ENCODE measurements at regions of chr11 and their contacts with region 1.

Region 1: DNA sequence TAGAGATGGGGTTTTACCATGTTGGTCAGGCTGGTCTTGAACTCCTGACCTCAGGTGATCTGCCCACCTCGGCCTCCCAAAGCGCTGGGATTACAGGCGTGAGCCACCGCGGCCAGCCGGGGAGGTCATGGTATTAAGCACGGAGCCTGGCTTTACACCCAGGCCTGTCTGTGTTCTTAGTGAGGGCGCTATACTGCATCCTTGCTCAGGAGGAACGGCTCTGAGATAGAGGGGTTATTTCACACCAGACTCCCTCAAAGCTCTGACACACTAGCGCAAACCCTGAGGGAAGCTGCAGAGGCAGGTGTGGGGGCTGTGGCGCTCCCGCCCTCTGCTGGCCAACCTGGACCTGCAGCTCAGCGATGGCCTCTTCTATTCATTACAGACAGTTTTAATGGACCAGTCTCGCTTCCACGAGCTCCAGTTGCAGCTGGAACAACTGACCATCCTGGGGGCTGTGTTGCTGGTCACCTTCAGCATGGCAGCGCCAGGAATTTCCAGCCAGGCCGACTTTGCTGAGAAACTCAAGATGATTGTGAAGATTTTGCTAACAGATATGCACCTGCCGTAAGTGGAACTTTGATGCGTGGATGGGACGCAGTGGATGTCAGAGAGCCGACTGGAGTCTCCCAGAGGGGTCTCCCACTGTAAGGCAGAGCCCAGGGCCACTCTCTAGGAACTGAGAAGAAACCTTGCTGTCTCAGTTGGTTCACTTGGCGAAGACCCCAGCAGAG is 26.2 kb downstream of the TCP11L1 start:
- DNase-seq: peak; percentile 62 to 83 (median 76)
- ATAC-seq: peak; percentile 91
- H3K4me3 ChIP-seq: no peak overlapping the region
- H3K4me3 Mint-ChIP-seq: peak overlapping the region in 2 of 10 donors; percentile 42 to 43
- H3K27ac ChIP-seq: no peak overlapping the region
- H3K27ac Mint-ChIP-seq: peak overlapping the region in 4 of 9 donors; percentile 14 to 83 (median 58)
- H3K4me1 ChIP-seq: peaks cover 0 to 21% of the 10 kb centered on the region in 2 donors
- H3K4me1 Mint-ChIP-seq: peaks cover 24 to 36% (median 29%) of the 10 kb centered on the region in 7 donors
- H3K27me3 ChIP-seq: no peaks in the 10 kb centered on the region
- H3K27me3 Mint-ChIP-seq: no peaks in the 10 kb centered on the region

Region 2: DNA sequence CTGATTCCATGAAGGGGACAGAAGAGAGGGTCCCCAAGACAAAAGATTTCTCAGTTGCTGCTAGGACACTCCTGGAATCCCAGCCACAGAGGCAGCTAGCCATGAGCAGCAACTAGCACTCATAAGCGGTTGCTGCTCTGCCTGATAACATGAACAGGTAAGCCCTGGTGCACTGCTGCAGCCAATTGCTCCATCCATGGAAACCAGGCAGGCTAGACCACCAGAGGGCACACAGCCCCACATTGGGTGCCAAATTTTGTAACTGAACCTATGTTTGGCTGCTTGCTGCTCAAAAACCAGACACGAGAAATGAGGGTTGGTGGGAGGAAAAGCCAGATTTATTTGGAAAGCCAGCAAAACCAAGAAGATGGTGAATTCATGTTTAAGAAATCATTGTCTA is 194.9 kb before region 1 on chr11:
- CTCF ChIA-PET with region 1: no interaction called
- POLR2A ChIA-PET with region 1: no interaction called
- intact Hi-C with region 1: loop called in 1 of 2 experiments (anchors 1 kb)
- DNase-seq: peak in 5 of 9 donors; percentile 11 to 32 (median 14)
- ATAC-seq: peak; percentile 52
- H3K4me3 ChIP-seq: no peak overlapping the region
- H3K4me3 Mint-ChIP-seq: peak overlapping the region in 1 of 10 donors; percentile 36
- H3K27ac ChIP-seq: no peak overlapping the region
- H3K27ac Mint-ChIP-seq: no peak overlapping the region
- H3K4me1 ChIP-seq: no peaks in the 10 kb centered on the region
- H3K4me1 Mint-ChIP-seq: no peaks in the 10 kb centered on the region
- H3K27me3 ChIP-seq: no peaks in the 10 kb centered on the region
- H3K27me3 Mint-ChIP-seq: peaks cover 6 to 35% (median 22%) of the 10 kb centered on the region in 5 donors

Region 3: DNA sequence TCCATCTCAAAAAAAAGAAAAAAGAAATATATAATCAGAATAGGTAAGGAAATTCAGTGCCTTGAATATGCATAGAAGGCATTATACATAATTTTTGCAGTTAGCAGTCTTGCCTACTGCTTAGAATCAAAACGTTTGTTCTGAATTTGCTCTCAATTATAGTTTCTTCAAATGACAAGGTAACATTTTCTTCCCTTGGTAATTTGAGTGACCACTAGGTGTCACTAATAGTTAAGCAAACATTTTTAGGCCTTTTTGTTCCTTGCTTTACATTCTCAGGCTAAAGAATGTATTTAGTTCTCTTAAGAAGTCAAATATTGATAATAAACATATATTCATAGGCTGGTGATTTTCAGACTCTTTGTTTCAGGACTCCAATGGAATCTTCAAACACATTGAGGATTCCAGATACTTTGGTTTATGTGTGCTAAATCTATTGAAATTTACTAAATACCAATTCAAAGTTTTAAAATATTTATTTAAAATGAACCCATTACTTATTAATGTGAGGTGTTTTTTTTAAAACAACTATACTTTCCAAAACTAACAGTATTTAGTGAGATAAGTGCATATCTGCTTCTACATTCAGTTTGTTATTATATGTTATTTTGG is 105.0 kb before region 1 on chr11:
- CTCF ChIA-PET with region 1: interaction called, 179 read pairs
- POLR2A ChIA-PET with region 1: interaction called, 3 read pairs
- intact Hi-C with region 1: loop called (anchors 1 kb)
- DNase-seq: peak in 7 of 9 donors; percentile 33 to 66 (median 55)
- ATAC-seq: peak; percentile 67
- H3K4me3 ChIP-seq: no peak overlapping the region
- H3K4me3 Mint-ChIP-seq: no peak overlapping the region
- H3K27ac ChIP-seq: no peak overlapping the region
- H3K27ac Mint-ChIP-seq: no peak overlapping the region
- H3K4me1 ChIP-seq: no peaks in the 10 kb centered on the region
- H3K4me1 Mint-ChIP-seq: peaks cover 0 to 5% (median 0%) of the 10 kb centered on the region in 7 donors
- H3K27me3 ChIP-seq: no peaks in the 10 kb centered on the region
- H3K27me3 Mint-ChIP-seq: no peaks in the 10 kb centered on the region

Region 4: GRCh38 chr11:33015621-33016551 is 49.7 kb before region 1 on chr11 and contains the start of gene DEPDC7:
- CTCF ChIA-PET with region 1: interaction called, 12 read pairs
- POLR2A ChIA-PET with region 1: interaction called, 3 read pairs
- intact Hi-C with region 1: loop called in 1 of 2 experiments (anchors 1 kb)
- DNase-seq: peak; percentile 72 to 84 (median 81)
- ATAC-seq: peak; percentile 90
- H3K4me3 ChIP-seq: peak within 1 kb of the TSS; percentile 65
- H3K4me3 Mint-ChIP-seq: peak within 1 kb of the TSS; percentile 86 to 93 (median 90)
- H3K27ac ChIP-seq: peak within 1 kb of the TSS; percentile 50
- H3K27ac Mint-ChIP-seq: peak within 1 kb of the TSS in 6 of 9 donors; percentile 63 to 77 (median 69)
- H3K4me1 ChIP-seq: peaks cover 14 to 23% of the 10 kb centered on the region in 2 donors
- H3K4me1 Mint-ChIP-seq: peaks cover 14 to 73% (median 58%) of the 10 kb centered on the region in 7 donors
- H3K27me3 ChIP-seq: peaks cover 0 to 7% of the 10 kb centered on the region in 2 donors
- H3K27me3 Mint-ChIP-seq: peaks cover 0 to 74% (median 5%) of the 10 kb centered on the region in 5 donors
- total RNA-seq, gene DEPDC7: 0.65 to 9.6 (median 2.1) TPM

Region 5: GRCh38 chr11:33052231-33052630 is 13.4 kb before region 1 on chr11:
- CTCF ChIA-PET with region 1: interaction called, 10 read pairs
- POLR2A ChIA-PET with region 1: interaction called, 4 read pairs
- intact Hi-C with region 1: no loop called
- DNase-seq: no peak
- ATAC-seq: no peak
- H3K4me3 ChIP-seq: no peak overlapping the region
- H3K4me3 Mint-ChIP-seq: no peak overlapping the region
- H3K27ac ChIP-seq: no peak overlapping the region
- H3K27ac Mint-ChIP-seq: no peak overlapping the region
- H3K4me1 ChIP-seq: no peaks in the 10 kb centered on the region
- H3K4me1 Mint-ChIP-seq: peaks cover 0 to 4% (median 0%) of the 10 kb centered on the region in 7 donors
- H3K27me3 ChIP-seq: no peaks in the 10 kb centered on the region
- H3K27me3 Mint-ChIP-seq: no peaks in the 10 kb centered on the region

Region 6: DNA sequence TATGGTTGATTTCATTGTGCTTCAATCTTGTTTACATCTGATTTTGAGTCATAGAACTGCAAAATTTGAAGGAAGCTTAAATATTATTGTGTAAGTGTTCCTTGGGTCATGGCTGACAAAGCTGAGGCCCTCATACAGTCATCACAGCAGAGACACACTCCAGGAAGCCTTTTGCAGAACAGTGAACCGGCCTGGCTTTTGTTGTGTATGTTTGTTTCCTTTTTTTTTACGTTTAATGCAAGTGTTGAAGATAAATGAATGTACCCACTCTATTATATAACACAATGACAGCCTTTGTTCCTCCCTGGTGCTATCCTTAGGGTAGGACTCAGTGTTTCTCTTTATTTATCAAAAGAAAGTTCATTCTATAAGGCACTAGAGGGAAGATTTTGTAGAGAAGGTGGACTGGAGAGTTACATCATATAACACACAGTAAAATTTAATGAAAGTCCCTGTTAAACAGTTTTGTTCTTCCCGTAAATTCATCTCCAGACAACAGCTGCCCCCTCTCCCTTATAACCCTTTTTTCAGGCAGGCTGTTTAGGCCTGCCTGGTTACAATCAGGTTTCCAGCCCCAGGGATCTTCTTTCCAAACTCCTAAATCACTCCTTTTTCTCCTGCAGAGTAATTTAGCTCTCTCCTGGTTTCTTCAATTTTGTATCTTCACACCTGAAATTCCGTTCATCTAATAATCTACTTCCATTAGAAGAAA is 130.0 kb after region 1 on chr11:
- CTCF ChIA-PET with region 1: no interaction called
- POLR2A ChIA-PET with region 1: no interaction called
- intact Hi-C with region 1: no loop called
- DNase-seq: no peak
- ATAC-seq: peak; percentile 88
- H3K4me3 ChIP-seq: no peak overlapping the region
- H3K4me3 Mint-ChIP-seq: no peak overlapping the region
- H3K27ac ChIP-seq: no peak overlapping the region
- H3K27ac Mint-ChIP-seq: no peak overlapping the region
- H3K4me1 ChIP-seq: no peaks in the 10 kb centered on the region
- H3K4me1 Mint-ChIP-seq: peaks cover 0 to 7% (median 0%) of the 10 kb centered on the region in 7 donors
- H3K27me3 ChIP-seq: no peaks in the 10 kb centered on the region
- H3K27me3 Mint-ChIP-seq: no peaks in the 10 kb centered on the region

Measured in naive thymus-derived CD4-positive, alpha-beta T cell (primary cell).